Colonic mucosa (tissue), 4 donors: ENCODE measurements at regions of chr4 and their contacts with region 1.

Region 1: GRCh38 chr4:182806259-182807252 is 110.6 kb downstream of the DCTD start:
- DNase-seq: peak; percentile 74
- H3K4me3 ChIP-seq: peak overlapping the region; percentile 23
- H3K27ac ChIP-seq: no peak overlapping the region
- H3K4me1 ChIP-seq: no peaks in the 10 kb centered on the region
- H3K27me3 ChIP-seq: no peaks in the 10 kb centered on the region
- CTCF ChIP-seq: peak; percentile 68

Region 2: GRCh38 chr4:182478475-182478874 is 328.1 kb before region 1 on chr4:
- intact Hi-C with region 1: loop called (anchors 5 kb)
- DNase-seq: no peak
- H3K4me3 ChIP-seq: no peak overlapping the region
- H3K27ac ChIP-seq: no peak overlapping the region
- H3K4me1 ChIP-seq: no peaks in the 10 kb centered on the region
- H3K27me3 ChIP-seq: no peaks in the 10 kb centered on the region
- CTCF ChIP-seq: peak; percentile 53

Region 3: DNA sequence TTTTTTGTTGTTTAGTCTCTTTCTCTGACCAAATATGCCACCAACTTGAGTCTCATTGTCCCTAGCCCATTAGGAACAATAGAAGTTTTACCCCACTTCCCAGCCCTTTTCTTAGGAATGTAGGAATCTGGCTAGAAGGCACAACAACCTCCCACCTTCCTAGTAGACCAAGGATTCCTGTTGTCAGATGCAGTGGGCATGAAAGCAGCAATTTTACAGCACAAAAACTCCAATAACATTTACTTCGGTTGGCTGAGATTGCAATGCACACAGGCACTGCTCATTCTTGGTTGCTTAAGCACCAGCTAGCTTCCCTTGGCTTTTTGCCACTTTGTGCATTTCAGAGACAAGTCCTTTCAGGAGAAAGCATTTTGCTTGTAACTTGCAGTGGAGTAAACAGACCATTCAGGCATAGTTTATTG is 250.5 kb before region 1 on chr4:
- intact Hi-C with region 1: no loop called
- DNase-seq: no peak
- H3K4me3 ChIP-seq: no peak overlapping the region
- H3K27ac ChIP-seq: no peak overlapping the region
- H3K4me1 ChIP-seq: no peaks in the 10 kb centered on the region
- H3K27me3 ChIP-seq: no peaks in the 10 kb centered on the region
- CTCF ChIP-seq: no peak

Region 4: GRCh38 chr4:182944484-182945213 is 138.1 kb after region 1 on chr4:
- intact Hi-C with region 1: no loop called
- DNase-seq: no peak
- H3K4me3 ChIP-seq: no peak overlapping the region
- H3K27ac ChIP-seq: no peak overlapping the region
- H3K4me1 ChIP-seq: no peaks in the 10 kb centered on the region
- H3K27me3 ChIP-seq: no peaks in the 10 kb centered on the region
- CTCF ChIP-seq: no peak

Region 5: GRCh38 chr4:183362916-183363542 is 556.5 kb after region 1 on chr4:
- intact Hi-C with region 1: no loop called
- DNase-seq: no peak
- H3K4me3 ChIP-seq: no peak overlapping the region
- H3K27ac ChIP-seq: no peak overlapping the region
- H3K4me1 ChIP-seq: no peaks in the 10 kb centered on the region
- H3K27me3 ChIP-seq: no peaks in the 10 kb centered on the region
- CTCF ChIP-seq: no peak